Sciatic nerve (tissue), 2 donors: ENCODE measurements at regions of chr22 and their contacts with region 1.

Region 1: DNA sequence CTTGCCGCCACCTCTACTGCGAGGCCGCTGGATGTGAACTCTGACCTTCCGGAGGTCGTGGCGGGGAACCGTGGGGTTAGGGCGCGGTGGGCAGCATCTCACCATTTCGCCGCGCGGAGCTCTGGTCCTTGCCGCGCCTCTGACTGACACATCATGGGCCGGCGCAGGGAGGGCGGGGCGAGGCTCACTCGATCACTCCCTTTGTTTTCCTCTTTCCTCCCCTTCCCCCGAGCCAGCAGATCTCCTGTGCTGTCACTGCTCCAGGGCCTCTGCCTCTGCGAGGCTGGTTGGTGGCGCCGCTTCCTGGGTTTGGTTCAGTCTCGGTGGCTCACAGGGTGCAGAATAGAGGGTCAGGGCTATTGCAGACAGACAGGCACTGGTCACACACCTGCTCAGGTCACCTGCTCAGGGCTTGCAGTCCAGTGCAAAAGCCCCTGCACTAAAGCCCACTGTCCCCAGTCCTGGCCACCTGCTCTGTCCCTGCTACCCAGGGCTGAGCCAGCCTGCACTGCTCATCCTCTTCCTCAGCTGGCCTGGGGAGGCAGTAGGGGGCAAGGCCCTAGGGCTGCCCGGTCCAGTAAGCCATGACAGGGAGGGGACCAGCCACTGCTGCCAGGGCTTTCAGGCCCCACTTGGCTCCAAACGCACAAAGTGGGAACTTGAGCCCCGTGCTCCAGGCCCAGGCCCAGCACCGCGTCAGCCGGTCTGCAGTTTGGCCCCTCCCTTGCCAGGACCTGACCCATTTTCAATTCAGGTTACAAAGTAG is 36.2 kb downstream of the PISD start:
- DNase-seq: peak; percentile 76
- ATAC-seq: peak; percentile 63

Region 2: DNA sequence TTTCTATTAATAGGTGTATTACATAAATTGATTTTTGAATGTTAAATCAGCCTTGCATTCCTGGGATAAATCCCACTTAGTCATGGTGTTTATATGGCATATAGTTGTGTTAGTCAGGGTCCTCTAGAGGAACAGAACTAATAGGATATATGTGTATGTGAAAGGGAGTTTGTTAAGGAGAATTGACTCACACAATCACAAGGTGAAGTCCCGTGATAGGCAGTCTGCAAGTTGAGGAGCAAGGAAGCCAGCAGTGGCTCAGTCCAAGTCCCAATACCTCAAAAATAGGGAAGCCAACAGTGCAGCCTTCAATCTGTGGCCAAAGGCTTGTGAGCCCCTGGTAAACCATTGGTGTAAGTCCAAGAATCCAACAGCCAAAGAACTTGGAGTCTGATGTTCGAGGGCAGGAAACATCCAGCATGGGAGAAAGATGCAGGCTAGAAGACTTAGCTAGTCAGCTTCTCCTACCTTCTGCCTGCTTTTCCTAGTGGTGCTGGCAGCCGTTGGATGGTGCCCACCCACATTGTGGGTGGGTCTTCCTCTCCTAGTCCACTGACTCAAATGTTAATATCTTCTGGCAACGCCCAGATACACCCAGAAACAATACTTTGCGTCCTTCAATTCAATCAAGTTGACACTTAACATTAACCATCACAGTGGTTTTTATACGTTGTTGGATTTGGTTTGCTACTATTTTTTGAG is 116.6 kb before region 1 on chr22:
- intact Hi-C with region 1: no loop called
- DNase-seq: no peak
- ATAC-seq: no peak

Region 3: GRCh38 chr22:31556627-31557203 is 69.1 kb before region 1 on chr22:
- intact Hi-C with region 1: loop called (anchors 10 kb)
- DNase-seq: no peak
- ATAC-seq: no peak

Region 4: GRCh38 chr22:31661851-31662656 is 36.2 kb after region 1 on chr22 and contains the start of gene PISD:
- intact Hi-C with region 1: no loop called
- DNase-seq: peak; percentile 97
- ATAC-seq: peak; percentile 100
- total RNA-seq, gene PISD: 49.0 TPM

Region 5: GRCh38 chr22:31947296-31947695 is 321.5 kb after region 1 on chr22:
- intact Hi-C with region 1: no loop called
- DNase-seq: no peak
- ATAC-seq: no peak